ENCODE measurements at regions of chr20 and their contacts with region 1.

Region 1: GRCh38 chr20:62302341-62303058 is at the start of gene ADRM1:
- DNase-seq: peak; percentile 96
- H3K4me3 Mint-ChIP-seq: peak within 1 kb of the TSS; percentile 93
- H3K27ac Mint-ChIP-seq: peak within 1 kb of the TSS; percentile 99
- H3K4me1 Mint-ChIP-seq: peaks cover 13% of the 10 kb centered on the region
- H3K27me3 Mint-ChIP-seq: no peaks in the 10 kb centered on the region
- total RNA-seq, gene ADRM1: 152 and 171 TPM in 2 replicates

Region 2: DNA sequence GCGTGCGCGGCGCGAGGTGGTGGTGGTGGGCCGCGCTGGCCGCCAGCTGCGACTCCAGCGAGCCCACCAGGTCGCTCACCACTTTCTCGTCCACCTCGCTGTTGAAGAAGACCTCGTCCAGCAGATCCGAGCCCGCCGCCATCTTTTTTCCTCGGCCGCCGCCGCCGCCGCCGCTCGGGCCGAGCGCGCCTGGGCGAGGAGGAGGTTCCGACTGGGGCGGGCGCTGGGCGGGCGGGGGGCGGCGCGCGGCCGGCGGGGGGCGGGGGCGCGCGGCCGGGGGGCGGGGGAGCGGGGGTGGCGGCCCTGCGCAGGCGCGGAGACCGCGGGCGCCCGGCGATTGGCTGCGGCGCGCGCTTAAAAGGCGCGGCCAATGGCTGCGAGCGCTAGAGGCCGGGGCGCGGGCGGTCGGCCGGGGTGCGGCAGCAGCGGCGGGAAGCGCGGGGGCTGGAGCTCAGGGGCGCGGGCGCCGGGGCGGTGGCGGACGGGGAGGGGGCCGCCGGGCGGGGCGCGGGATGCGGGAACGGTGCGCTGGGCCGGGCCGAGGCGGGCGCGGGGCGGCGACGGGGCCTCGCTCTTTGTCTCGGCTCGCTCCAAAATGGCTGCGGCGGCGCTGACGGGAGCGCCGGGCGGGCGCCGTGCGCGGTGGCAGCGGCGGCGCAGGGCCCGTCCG is 236.7 kb before region 1 on chr20 and contains the start of gene TAF4:
- intact Hi-C with region 1: loop called (anchors 5 kb)
- DNase-seq: peak; percentile 80
- H3K4me3 Mint-ChIP-seq: peak within 1 kb of the TSS; percentile 79
- H3K27ac Mint-ChIP-seq: peak within 1 kb of the TSS; percentile 80
- H3K4me1 Mint-ChIP-seq: peaks cover 32% of the 10 kb centered on the region
- H3K27me3 Mint-ChIP-seq: peaks cover 8% of the 10 kb centered on the region
- total RNA-seq, gene TAF4: 23.6 and 26.9 TPM in 2 replicates

Region 3: DNA sequence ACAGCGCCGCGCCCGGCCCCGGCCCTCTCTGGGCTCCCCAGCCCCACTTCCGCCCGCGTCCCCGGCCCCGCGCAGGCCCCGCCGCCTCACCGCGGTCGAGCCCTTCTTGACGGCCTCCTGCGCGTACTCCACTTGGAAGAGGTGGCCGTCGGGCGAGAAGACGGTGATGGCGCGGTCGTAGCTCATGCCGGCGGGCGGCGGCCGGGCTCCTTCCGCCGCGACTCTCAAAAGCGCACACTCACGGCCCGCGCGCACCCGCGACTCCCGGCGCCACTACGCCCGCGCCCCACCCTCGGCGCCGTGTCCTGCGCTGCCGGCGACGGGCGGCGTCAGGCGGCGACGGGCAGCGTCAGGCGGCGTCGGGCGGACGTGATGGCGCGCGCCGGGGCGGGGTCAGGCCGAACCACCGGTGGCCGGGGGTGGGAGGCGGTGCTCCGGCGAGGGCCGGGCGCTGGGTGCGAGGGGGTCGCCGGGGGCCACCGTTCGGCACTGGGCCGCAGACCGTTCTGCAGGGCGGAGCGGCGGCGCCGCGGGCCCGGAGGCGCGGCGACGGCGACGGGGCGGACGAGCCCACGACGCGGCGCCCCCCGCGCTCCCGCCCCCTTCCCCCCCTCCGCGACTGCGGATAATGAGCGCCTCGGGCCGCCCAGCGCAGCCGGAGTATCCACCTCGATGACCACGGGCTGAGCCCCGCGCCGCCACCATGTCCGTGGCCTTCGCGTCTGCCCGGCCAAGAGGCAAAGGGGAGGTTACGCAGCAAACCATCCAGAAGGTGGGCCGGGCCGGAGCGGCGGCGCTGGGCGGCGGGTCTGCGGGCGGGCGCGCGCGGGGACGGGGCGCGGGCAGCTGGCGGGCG is 159.2 kb before region 1 on chr20 and contains the starts of genes PSMA7 and SS18L1:
- intact Hi-C with region 1: loop called (anchors 1 kb)
- DNase-seq: peak; percentile 84
- H3K4me3 Mint-ChIP-seq: peak within 1 kb of the TSS; percentile 92
- H3K27ac Mint-ChIP-seq: peak within 1 kb of the TSS; percentile 90
- H3K4me1 Mint-ChIP-seq: peaks cover 38% of the 10 kb centered on the region
- H3K27me3 Mint-ChIP-seq: no peaks in the 10 kb centered on the region
- total RNA-seq, gene PSMA7: 405 and 434 TPM in 2 replicates
- total RNA-seq, gene SS18L1: 26.0 and 30.7 TPM in 2 replicates

Region 4: GRCh38 chr20:62232196-62233045 is 70.1 kb before region 1 on chr20:
- intact Hi-C with region 1: no loop called
- DNase-seq: no peak
- H3K4me3 Mint-ChIP-seq: no peak overlapping the region
- H3K27ac Mint-ChIP-seq: no peak overlapping the region
- H3K4me1 Mint-ChIP-seq: no peaks in the 10 kb centered on the region
- H3K27me3 Mint-ChIP-seq: no peaks in the 10 kb centered on the region

Region 5: DNA sequence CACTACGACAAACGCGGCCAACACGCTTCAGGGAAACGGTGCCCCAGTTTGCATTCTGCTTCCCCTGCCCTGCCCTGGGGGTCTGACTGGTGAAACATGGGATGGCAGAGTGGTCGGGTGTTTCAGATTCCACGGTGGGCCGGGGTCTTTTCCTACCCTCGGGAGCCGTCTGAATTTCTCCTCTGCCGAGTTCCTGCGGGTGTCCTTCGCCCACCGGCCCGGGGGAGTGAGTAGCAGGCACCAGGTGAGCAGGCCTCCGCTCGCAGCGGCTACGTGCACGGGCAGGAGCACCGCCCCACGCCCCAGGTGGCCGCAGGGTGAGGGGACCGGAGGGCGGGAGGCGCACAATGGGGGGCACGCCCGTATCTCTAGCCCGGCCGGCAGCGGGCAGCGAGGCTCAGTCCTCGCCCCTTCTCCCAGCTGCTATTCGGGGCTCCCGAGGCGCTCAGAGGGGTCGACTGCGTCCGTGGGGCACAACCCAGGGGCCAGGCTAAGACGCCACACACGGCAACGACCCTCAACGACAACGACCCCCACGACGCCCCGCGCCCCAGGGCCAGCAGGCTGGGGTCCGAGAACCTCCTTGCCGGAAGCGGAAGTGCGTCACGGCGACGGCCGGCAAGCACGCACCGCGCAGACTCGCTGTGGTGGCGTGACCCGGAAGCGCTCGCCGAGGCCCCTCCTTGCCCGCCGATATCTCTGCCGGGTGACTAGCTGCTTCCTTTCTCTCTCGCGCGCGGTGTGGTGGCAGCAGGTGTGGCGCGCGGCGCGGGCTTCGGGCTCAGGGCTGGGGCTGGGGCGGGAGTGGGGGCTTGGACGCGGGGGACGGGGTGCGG is 84.1 kb after region 1 on chr20 and contains the start of gene RPS21:
- intact Hi-C with region 1: loop called (anchors 1 kb)
- DNase-seq: peak; percentile 90
- H3K4me3 Mint-ChIP-seq: peak within 1 kb of the TSS; percentile 95
- H3K27ac Mint-ChIP-seq: peak within 1 kb of the TSS; percentile 87
- H3K4me1 Mint-ChIP-seq: peaks cover 23% of the 10 kb centered on the region
- H3K27me3 Mint-ChIP-seq: no peaks in the 10 kb centered on the region
- total RNA-seq, gene RPS21: 2,020 and 2,085 TPM in 2 replicates

Region 6: GRCh38 chr20:62652051-62652926 is 349.8 kb after region 1 on chr20:
- intact Hi-C with region 1: loop called (anchors 2 kb)
- DNase-seq: peak; percentile 66
- H3K4me3 Mint-ChIP-seq: peak overlapping the region; percentile 72
- H3K27ac Mint-ChIP-seq: peak overlapping the region; percentile 90
- H3K4me1 Mint-ChIP-seq: peaks cover 40% of the 10 kb centered on the region
- H3K27me3 Mint-ChIP-seq: no peaks in the 10 kb centered on the region

Measured in activated T-helper 2 cell treated with anti-CD3 and anti-CD28 coated beads, Interferon-gamma antibody, Interleukin-2, Interleukin-4, amounts not matched to agents 10 μg/mL and 5 μg/mL and 100 μg/mL, durations not matched to agents 14 hours and 24 hours and 36 hours (primary cell).